Activated naive CD4-positive, alpha-beta T cell treated with anti-CD3 and anti-CD28 coated beads for 36 hours (primary cell): ENCODE measurements at regions of chr12 and their contacts with region 1.

Region 1: GRCh38 chr12:27940756-27941402 is 31.7 kb downstream of the PTHLH start:
- DNase-seq: peak; percentile 91
- H3K4me3 Mint-ChIP-seq: no peak overlapping the region
- H3K27ac Mint-ChIP-seq: no peak overlapping the region
- H3K4me1 Mint-ChIP-seq: no peaks in the 10 kb centered on the region
- H3K27me3 Mint-ChIP-seq: peaks cover 3% of the 10 kb centered on the region

Region 2: DNA sequence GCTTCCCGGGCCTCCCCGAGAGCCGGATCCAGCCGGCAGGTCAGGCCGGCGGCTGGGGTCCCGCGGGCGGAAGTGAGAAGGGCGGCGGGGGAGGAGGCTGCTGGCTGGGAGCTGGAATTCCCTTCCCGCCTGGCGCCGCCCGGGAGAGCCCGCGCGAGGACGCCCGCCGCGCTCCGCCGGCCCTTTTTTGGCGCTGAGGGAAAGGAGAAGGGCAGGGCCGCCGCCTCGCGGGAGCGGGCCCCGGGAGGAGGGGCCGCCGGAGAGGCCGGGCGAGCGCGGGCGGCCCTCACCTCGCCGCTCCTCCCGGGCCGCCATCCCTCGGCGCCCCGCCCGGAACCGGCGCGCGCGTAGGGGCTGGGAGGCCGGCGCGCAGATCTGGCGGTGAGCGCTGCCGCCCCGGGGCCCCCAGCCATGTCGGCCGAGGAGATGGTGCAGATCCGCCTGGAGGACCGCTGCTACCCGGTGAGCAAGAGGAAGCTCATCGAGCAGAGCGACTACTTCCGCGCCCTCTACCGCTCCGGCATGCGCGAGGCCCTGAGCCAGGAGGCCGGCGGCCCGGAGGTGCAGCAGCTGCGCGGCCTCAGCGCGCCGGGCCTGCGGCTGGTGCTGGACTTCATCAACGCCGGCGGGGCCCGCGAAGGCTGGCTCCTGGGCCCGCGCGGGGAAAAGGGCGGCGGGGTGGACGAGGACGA is 160.8 kb before region 1 on chr12 and contains the starts of genes KLHL42 and MANSC4:
- CTCF ChIA-PET with region 1: no interaction called
- intact Hi-C with region 1: loop called (anchors 2 kb)
- DNase-seq: peak; percentile 71
- H3K4me3 Mint-ChIP-seq: peak within 1 kb of the TSS; percentile 82
- H3K27ac Mint-ChIP-seq: peak within 1 kb of the TSS; percentile 80
- H3K4me1 Mint-ChIP-seq: peaks cover 27% of the 10 kb centered on the region
- H3K27me3 Mint-ChIP-seq: no peaks in the 10 kb centered on the region
- total RNA-seq, gene KLHL42: 9.4 to 9.8 TPM
- total RNA-seq, gene MANSC4: not detected

Region 3: GRCh38 chr12:27861428-27862167 is 79.3 kb before region 1 on chr12:
- CTCF ChIA-PET with region 1: no interaction called
- intact Hi-C with region 1: loop called (anchors 2 kb)
- DNase-seq: peak; percentile 35
- H3K4me3 Mint-ChIP-seq: no peak overlapping the region
- H3K27ac Mint-ChIP-seq: no peak overlapping the region
- H3K4me1 Mint-ChIP-seq: peaks cover 26% of the 10 kb centered on the region
- H3K27me3 Mint-ChIP-seq: peaks cover 3% of the 10 kb centered on the region

Region 4: DNA sequence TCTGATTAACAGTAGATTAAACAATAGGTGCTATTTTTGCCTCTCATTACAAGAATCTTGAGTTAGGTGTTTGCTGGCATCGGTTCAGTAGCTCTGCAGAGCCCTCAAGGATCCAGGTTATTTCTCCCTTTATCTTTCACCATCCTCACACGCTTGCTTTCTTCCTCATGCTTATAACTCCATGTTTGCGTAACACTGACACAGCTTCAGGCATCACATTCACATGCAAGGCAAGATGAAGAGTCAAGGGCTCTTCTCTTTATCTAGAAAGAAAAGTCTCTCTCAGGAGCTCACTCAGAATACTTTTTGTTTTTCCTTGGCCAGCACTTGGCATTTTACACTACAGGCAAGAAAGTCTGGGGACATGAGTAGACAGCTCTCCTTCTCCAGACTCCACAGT is 55.9 kb after region 1 on chr12:
- CTCF ChIA-PET with region 1: no interaction called
- intact Hi-C with region 1: no loop called
- DNase-seq: no peak
- H3K4me3 Mint-ChIP-seq: no peak overlapping the region
- H3K27ac Mint-ChIP-seq: no peak overlapping the region
- H3K4me1 Mint-ChIP-seq: no peaks in the 10 kb centered on the region
- H3K27me3 Mint-ChIP-seq: no peaks in the 10 kb centered on the region

Region 5: GRCh38 chr12:29187756-29188155 is 1246.9 kb after region 1 on chr12:
- CTCF ChIA-PET with region 1: no interaction called
- intact Hi-C with region 1: no loop called
- DNase-seq: no peak
- H3K4me3 Mint-ChIP-seq: no peak overlapping the region
- H3K27ac Mint-ChIP-seq: no peak overlapping the region
- H3K4me1 Mint-ChIP-seq: no peaks in the 10 kb centered on the region
- H3K27me3 Mint-ChIP-seq: no peaks in the 10 kb centered on the region